ENCODE measurements at regions of chr13 and their contacts with region 1.

Region 1: GRCh38 chr13:32195713-32196112 is 119.5 kb downstream of the ZAR1L start:
- DNase-seq: peak in 1 of 2 experiments; percentile 51
- H3K4me3 ChIP-seq: no peak overlapping the region
- H3K4me3 Mint-ChIP-seq: no peak overlapping the region
- H3K27ac Mint-ChIP-seq: peak overlapping the region; percentile 35
- H3K4me1 ChIP-seq: peaks cover 34% of the 10 kb centered on the region
- H3K4me1 Mint-ChIP-seq: peaks cover 35% of the 10 kb centered on the region
- H3K27me3 ChIP-seq: no peaks in the 10 kb centered on the region
- H3K27me3 Mint-ChIP-seq: no peaks in the 10 kb centered on the region
- CTCF ChIP-seq: no peak

Region 2: DNA sequence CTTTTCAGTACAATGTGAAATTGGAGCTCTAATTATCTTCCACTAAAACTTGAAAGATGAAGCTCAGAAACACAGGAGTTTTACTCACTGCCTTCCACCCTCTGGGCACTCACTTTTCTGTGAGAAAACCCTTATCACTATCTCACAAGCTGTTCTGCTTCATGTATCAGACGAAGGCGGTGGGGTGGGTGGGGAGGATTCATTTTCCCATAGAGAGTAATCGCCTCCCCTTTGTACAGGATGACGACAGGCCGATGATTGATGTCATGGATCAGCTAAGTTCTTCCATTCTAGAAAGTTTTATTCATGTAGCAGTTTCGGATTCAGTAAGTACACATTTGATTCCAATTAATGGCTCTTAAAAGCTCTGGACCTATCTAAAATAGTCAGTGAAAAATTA is 20.4 kb before region 1 on chr13:
- CTCF ChIA-PET with region 1: interaction called, 11 read pairs
- POLR2A ChIA-PET with region 1: interaction called, 3 read pairs
- intact Hi-C with region 1: no loop called
- DNase-seq: no peak
- H3K4me3 ChIP-seq: no peak overlapping the region
- H3K4me3 Mint-ChIP-seq: no peak overlapping the region
- H3K27ac Mint-ChIP-seq: no peak overlapping the region
- H3K4me1 ChIP-seq: peaks cover 34% of the 10 kb centered on the region
- H3K4me1 Mint-ChIP-seq: peaks cover 30% of the 10 kb centered on the region
- H3K27me3 ChIP-seq: no peaks in the 10 kb centered on the region
- H3K27me3 Mint-ChIP-seq: no peaks in the 10 kb centered on the region
- CTCF ChIP-seq: no peak

Region 3: DNA sequence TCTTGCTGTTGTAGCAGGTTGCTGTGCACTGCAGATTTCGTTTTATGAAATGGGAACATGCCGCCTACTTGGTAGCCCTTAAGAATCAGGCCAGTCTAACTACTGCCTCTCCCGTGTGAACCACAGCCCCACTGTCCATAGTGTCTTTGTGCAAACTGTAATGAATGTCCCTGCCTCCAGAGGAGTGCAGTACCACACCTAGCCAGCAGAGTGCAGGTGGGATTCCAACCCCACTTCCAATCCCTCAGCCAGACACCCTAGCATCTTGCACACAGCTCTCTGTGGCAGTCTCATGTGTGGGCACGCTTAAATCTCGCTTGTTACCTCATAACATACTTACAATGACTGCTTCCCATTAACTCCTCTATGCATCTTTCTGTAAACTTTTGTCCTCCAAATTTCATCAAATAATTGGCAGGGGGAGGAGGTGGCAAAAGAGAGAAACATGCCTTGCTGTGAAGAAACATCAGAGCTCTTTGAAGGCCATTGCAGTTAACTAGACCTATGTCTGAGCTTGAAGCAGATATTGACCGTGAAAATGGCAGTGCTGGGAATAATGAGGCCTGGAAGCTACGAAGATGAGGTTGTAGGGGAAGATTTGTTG is 72.2 kb after region 1 on chr13:
- CTCF ChIA-PET with region 1: no interaction called
- POLR2A ChIA-PET with region 1: no interaction called
- intact Hi-C with region 1: no loop called
- DNase-seq: peak; percentile 77 to 79
- H3K4me3 ChIP-seq: no peak overlapping the region
- H3K4me3 Mint-ChIP-seq: no peak overlapping the region
- H3K27ac Mint-ChIP-seq: peak overlapping the region; percentile 27
- H3K4me1 ChIP-seq: peaks cover 30% of the 10 kb centered on the region
- H3K4me1 Mint-ChIP-seq: peaks cover 15% of the 10 kb centered on the region
- H3K27me3 ChIP-seq: no peaks in the 10 kb centered on the region
- H3K27me3 Mint-ChIP-seq: no peaks in the 10 kb centered on the region
- CTCF ChIP-seq: peak; percentile 87 to 92